Natural killer cell (primary cell): ENCODE measurements at regions of chr1 and their contacts with region 1.

Region 1: DNA sequence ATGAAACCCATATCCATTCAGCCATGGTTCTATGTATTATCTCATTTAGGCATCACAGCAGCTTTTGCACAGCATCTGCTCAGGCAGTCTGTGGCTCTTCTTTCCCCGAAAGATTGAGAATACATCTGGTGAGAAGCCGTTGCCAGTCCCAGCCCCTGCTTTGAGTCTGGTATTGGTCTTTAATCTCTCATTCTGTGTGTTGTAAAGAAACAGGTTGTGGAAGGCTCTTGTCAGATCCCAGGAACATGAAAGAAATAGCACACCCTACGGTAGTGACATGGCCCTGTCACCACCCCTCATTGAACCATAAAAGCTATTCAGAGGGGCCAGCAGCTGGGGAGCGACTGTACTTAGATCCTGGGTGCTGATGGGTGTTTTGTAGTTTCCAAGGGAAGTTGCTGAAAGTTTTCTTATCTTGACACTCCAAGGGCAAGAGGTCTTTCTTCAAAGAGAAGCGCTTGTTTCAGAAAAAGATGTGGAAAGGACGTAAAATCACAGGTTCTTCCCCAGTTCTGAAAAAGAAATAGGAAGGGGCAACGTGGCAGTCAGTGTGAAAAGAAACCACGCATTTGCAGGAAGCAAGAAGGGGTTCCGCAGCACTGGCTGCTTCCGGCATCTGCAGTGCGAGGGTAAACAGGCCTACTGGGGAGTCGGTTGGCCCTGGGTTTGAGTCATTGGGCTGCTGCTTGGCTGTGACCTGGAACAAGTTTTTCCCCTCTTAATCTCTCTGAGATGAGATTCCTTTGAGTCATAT is 145.0 kb downstream of the DHRS3 start:
- DNase-seq: peak; percentile 50 to 74
- ATAC-seq: peak; percentile 72 to 80 (median 75)
- H3K4me3 ChIP-seq: no peak overlapping the region
- H3K4me3 Mint-ChIP-seq: peak overlapping the region; percentile 88
- H3K27ac ChIP-seq: peak overlapping the region; percentile 77
- H3K27ac Mint-ChIP-seq: peak overlapping the region; percentile 96 to 98
- H3K4me1 ChIP-seq: peaks cover 76% of the 10 kb centered on the region
- H3K4me1 Mint-ChIP-seq: peaks cover 88 to 90% of the 10 kb centered on the region in 2 donors
- H3K27me3 ChIP-seq: no peaks in the 10 kb centered on the region
- H3K27me3 Mint-ChIP-seq: no peaks in the 10 kb centered on the region
- CTCF ChIP-seq: no peak

Region 2: DNA sequence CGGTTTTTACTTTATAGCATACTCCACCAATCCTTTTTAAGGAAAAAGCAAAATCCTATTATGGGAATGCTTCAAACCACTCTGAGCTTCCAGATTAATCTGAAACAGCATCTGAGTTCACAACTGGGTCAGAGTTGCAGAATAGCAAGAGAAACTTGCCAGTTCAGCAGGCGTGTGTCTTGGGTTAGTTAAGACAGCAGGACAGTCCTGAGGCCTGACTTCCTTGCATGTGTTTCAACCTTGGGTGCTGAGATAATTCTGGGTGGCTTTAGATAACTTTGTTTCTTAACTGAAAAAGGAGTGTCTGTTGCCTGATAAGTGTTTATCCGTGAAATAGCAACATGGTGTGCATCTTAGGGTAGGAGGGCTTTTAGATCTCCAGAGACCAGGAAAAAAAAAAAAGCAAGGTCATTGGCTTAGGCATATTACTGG is 24.2 kb before region 1 on chr1:
- intact Hi-C with region 1: loop called (anchors 2 kb)
- DNase-seq: peak in 1 of 2 donors; percentile 38
- ATAC-seq: no peak
- H3K4me3 ChIP-seq: no peak overlapping the region
- H3K4me3 Mint-ChIP-seq: peak overlapping the region; percentile 85
- H3K27ac ChIP-seq: peak overlapping the region; percentile 75
- H3K27ac Mint-ChIP-seq: peak overlapping the region; percentile 95 to 98
- H3K4me1 ChIP-seq: peaks cover 34% of the 10 kb centered on the region
- H3K4me1 Mint-ChIP-seq: peaks cover 72 to 75% of the 10 kb centered on the region in 2 donors
- H3K27me3 ChIP-seq: no peaks in the 10 kb centered on the region
- H3K27me3 Mint-ChIP-seq: no peaks in the 10 kb centered on the region
- CTCF ChIP-seq: no peak

Region 3: GRCh38 chr1:12604114-12604874 is 131.3 kb after region 1 on chr1:
- intact Hi-C with region 1: loop called (anchors 5 kb)
- DNase-seq: peak; percentile 64 to 83
- ATAC-seq: peak; percentile 88 to 95 (median 94)
- H3K4me3 ChIP-seq: no peak overlapping the region
- H3K4me3 Mint-ChIP-seq: peak overlapping the region; percentile 82
- H3K27ac ChIP-seq: peak overlapping the region; percentile 60
- H3K27ac Mint-ChIP-seq: peak overlapping the region; percentile 90 to 95
- H3K4me1 ChIP-seq: peaks cover 52% of the 10 kb centered on the region
- H3K4me1 Mint-ChIP-seq: peaks cover 69 to 82% of the 10 kb centered on the region in 2 donors
- H3K27me3 ChIP-seq: no peaks in the 10 kb centered on the region
- H3K27me3 Mint-ChIP-seq: no peaks in the 10 kb centered on the region
- CTCF ChIP-seq: no peak